BJ (cell line): ENCODE measurements at regions of chr3 and their contacts with region 1.

Region 1: DNA sequence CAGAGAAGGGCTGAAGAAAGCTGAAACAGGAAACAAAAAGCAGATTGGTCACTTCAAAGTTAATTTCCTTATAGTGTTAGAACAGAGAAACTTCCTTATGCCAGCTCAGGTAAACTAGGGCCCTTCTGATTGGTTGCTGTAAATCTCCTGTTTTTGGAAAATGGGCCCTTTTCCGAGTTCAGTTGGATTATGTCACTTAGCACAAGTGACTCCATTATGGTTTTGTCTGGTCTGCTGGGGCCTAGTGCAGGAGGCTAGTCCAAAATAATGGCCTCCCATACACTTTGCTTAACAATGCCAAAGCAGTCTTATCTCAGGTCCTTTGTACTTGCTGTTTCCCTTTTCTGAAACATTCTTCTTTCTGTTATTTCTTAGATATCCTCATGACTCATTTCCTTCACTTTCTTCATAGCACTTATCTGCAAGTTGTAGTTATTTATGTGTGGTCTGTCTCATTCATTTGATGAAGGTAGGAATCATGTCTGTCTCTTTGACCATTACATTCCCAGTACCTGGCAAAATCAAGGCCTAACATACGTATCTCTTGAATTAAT is 7.7 kb upstream of the DCP1A start:
- DNase-seq: no peak
- H3K4me3 ChIP-seq: no peak overlapping the region
- H3K27me3 ChIP-seq: no peaks in the 10 kb centered on the region
- CTCF ChIP-seq: no peak

Region 2: GRCh38 chr3:52990637-52991036 is 364.4 kb before region 1 on chr3:
- CTCF ChIA-PET with region 1: no interaction called
- POLR2A ChIA-PET with region 1: interaction called, 17 read pairs
- DNase-seq: no peak
- H3K4me3 ChIP-seq: no peak overlapping the region
- H3K27me3 ChIP-seq: no peaks in the 10 kb centered on the region
- CTCF ChIP-seq: no peak

Region 3: DNA sequence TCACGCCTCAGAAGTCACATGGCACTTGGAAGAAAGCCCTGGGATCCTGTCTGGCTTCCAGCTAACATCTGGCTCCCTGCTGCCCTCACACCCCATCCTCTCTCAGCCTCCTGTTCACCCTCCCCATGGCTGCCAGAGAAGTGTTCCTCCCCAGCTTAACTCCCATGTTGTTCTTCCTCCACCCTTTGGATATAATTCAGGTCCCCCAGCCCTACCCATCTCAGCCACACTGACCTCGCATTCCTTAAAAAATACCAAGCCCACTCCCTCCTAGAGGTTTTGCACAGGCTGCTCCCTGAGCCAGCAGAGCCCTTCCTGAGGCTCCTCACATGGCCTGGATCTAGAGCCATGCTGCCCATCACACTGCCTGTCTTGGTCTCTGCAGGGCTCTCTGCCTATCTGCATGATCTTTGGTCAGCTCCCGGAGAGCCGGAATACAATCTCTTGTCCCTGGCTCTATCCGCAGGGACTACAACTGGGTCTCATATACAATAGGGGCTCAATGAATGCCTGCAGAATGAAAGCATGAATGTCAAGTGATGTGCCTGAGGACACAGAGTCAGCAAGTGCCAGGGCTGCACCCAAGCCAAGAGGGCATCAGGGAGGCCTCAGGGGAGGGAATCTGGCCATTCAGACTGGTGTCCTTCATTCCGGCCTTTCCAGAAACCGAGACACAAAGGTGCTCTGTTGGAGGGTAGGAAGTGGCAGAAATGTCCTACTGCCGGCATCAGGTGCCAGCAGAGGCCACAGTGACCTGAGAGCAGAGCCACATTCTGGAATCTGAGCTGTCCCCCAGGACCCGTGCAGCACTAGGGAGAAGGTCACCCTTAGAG is 95.4 kb before region 1 on chr3:
- CTCF ChIA-PET with region 1: no interaction called
- POLR2A ChIA-PET with region 1: no interaction called
- DNase-seq: no peak
- H3K4me3 ChIP-seq: no peak overlapping the region
- H3K27me3 ChIP-seq: no peaks in the 10 kb centered on the region
- CTCF ChIP-seq: no peak